CD4-positive, alpha-beta T cell (primary cell): ENCODE measurements at regions of chr3 and their contacts with region 1.

Region 1: DNA sequence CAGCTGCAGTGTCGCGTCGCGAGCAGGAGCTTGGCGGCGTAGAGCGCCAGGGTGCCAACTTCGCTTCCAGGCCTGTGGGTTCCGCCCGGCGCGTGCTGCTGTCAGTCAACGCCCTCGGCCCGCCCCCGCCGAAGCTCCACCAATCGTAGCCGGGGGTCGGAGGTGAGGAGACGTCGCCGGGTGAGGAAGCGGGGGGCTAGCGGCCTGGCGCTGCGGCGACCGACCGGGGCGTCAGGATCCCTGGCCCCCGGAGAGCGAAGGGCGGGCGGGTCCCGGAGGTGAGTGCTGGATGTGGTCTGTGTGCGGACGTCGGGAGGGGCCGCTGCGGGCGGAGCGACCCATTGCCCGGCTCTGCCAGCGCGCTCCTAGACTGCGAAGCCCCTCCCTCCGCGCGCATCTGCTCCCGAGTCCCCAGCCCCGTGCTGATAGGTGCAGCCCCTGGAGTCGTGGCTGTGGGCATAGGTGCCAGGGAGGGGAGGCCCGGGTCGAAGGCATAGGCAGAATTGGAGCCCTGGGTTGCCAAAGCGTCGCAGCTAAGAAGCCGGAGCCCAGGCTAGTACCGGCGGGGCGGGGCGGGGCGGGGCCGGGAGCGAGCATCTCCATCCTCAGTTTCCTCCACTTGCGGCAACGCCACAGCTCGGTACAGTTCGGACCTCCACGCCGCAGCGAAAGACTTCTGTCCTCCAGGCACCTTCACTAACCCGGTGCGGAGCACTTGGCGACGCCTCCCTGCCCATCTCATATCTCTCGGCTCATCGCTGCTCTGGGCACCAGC is at the start of gene NXPE3:
- DNase-seq: peak; percentile 88 to 96 (median 93)
- ATAC-seq: peak; percentile 91
- H3K4me3 ChIP-seq: peak within 1 kb of the TSS; percentile 89
- H3K4me3 Mint-ChIP-seq: peak within 1 kb of the TSS; percentile 98
- H3K27ac ChIP-seq: peak within 1 kb of the TSS; percentile 87 to 89
- H3K27ac Mint-ChIP-seq: peak within 1 kb of the TSS; percentile 100
- H3K4me1 ChIP-seq: peaks cover 26% of the 10 kb centered on the region
- H3K4me1 Mint-ChIP-seq: peaks cover 62% of the 10 kb centered on the region
- H3K27me3 ChIP-seq: no peaks in the 10 kb centered on the region
- H3K27me3 Mint-ChIP-seq: no peaks in the 10 kb centered on the region
- CTCF ChIP-seq: no peak
- total RNA-seq, gene NXPE3: 37.4 to 37.5 TPM

Region 2: GRCh38 chr3:100708967-100709841 is 1070.0 kb before region 1 on chr3 and contains the start of gene TFG:
- CTCF ChIA-PET with region 1: no interaction called
- POLR2A ChIA-PET with region 1: no interaction called
- intact Hi-C with region 1: loop called in 1 of 2 experiments (anchors 5 kb)
- DNase-seq: peak; percentile 94 to 100 (median 96)
- ATAC-seq: peak; percentile 91
- H3K4me3 ChIP-seq: peak within 1 kb of the TSS; percentile 73
- H3K4me3 Mint-ChIP-seq: peak within 1 kb of the TSS; percentile 97
- H3K27ac ChIP-seq: peak within 1 kb of the TSS; percentile 77 to 94
- H3K27ac Mint-ChIP-seq: peak within 1 kb of the TSS; percentile 97
- H3K4me1 ChIP-seq: peaks cover 24% of the 10 kb centered on the region
- H3K4me1 Mint-ChIP-seq: peaks cover 49% of the 10 kb centered on the region
- H3K27me3 ChIP-seq: no peaks in the 10 kb centered on the region
- H3K27me3 Mint-ChIP-seq: peaks cover 16% of the 10 kb centered on the region
- CTCF ChIP-seq: no peak
- total RNA-seq, gene TFG: 56.5 to 58.8 TPM

Region 3: GRCh38 chr3:101453961-101454360 is 325.3 kb before region 1 on chr3:
- CTCF ChIA-PET with region 1: no interaction called
- POLR2A ChIA-PET with region 1: no interaction called
- intact Hi-C with region 1: no loop called
- DNase-seq: no peak
- ATAC-seq: no peak
- H3K4me3 ChIP-seq: no peak overlapping the region
- H3K4me3 Mint-ChIP-seq: no peak overlapping the region
- H3K27ac ChIP-seq: no peak overlapping the region
- H3K27ac Mint-ChIP-seq: peak overlapping the region; percentile 16
- H3K4me1 ChIP-seq: no peaks in the 10 kb centered on the region
- H3K4me1 Mint-ChIP-seq: peaks cover 42% of the 10 kb centered on the region
- H3K27me3 ChIP-seq: no peaks in the 10 kb centered on the region
- H3K27me3 Mint-ChIP-seq: no peaks in the 10 kb centered on the region
- CTCF ChIP-seq: no peak

Region 4: DNA sequence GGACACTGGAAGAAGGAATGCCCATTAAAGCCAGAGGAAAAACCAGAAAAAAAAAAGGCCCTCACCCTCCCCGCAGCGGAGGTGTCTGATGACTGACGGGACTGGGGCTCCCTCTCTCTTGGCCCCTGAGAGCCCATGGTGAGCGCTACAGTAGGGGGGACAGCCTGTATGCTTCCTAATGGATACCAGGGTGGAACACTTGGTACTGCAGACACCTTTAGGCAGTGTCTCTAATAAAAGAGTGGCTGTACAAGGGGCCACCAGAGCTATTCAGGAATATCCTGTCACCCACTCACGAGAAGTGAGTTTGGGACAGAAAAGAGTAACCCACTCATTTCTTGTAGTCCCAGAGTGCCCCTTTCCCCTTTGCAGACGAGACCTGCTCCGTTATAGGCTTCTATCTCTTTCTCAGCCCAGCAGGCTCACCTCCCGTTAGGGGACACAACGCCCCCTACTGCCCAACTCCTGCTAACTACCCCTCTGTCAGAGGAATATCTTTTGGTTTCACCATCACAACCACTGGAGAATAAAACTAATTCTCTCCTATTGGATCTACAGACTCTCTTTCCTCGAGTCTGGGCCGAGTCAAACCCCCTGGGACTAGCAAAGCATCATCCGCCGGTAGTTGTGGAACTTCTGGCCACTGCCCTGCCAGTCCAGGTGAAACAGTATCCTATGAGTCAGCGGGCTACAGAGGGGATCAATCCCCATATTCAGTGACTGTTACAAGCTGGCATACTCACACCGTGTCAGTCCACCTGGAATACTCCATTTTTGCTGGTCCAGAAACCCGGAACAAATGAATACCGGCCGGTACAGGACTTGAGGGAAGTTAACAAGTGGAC is 143.1 kb before region 1 on chr3:
- CTCF ChIA-PET with region 1: no interaction called
- POLR2A ChIA-PET with region 1: no interaction called
- intact Hi-C with region 1: no loop called
- DNase-seq: peak; percentile 58 to 75 (median 66)
- ATAC-seq: peak; percentile 94
- H3K4me3 ChIP-seq: no peak overlapping the region
- H3K4me3 Mint-ChIP-seq: no peak overlapping the region
- H3K27ac ChIP-seq: no peak overlapping the region
- H3K27ac Mint-ChIP-seq: no peak overlapping the region
- H3K4me1 ChIP-seq: peaks cover 6% of the 10 kb centered on the region
- H3K4me1 Mint-ChIP-seq: peaks cover 6% of the 10 kb centered on the region
- H3K27me3 ChIP-seq: no peaks in the 10 kb centered on the region
- H3K27me3 Mint-ChIP-seq: no peaks in the 10 kb centered on the region
- CTCF ChIP-seq: peak; percentile 61

Region 5: DNA sequence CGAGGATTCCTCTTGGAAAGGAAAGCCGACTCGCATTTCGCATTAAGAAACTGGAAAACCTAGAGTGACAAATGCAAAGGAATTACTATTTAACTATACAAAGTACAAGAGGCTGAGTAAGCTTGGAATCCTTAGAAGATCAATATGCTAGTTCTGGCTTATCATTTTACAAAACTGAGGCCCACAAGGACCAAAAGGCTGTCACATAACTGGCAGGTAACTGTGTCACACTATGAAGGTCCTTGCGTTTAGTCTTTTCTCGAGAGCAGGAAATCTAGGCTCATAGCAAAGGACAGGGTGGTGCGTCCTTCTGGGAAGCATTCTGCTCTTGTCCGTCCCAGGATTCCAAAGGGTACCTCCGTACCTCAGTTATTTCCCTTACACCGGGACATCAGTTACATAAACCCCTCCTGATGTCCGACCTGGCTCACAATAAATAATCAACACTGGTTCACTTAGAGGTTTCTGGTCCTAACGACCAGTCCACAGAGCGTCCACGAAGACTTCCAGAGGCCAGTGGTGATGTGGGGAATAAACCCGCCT is 93.3 kb before region 1 on chr3:
- CTCF ChIA-PET with region 1: no interaction called
- POLR2A ChIA-PET with region 1: interaction called, 17 read pairs
- intact Hi-C with region 1: no loop called
- DNase-seq: peak in 4 of 14 experiments; percentile 7 to 40 (median 26)
- ATAC-seq: peak; percentile 5
- H3K4me3 ChIP-seq: peak overlapping the region; percentile 91
- H3K4me3 Mint-ChIP-seq: peak overlapping the region; percentile 99
- H3K27ac ChIP-seq: peak overlapping the region; percentile 87 to 94
- H3K27ac Mint-ChIP-seq: peak overlapping the region; percentile 99
- H3K4me1 ChIP-seq: peaks cover 30% of the 10 kb centered on the region
- H3K4me1 Mint-ChIP-seq: peaks cover 49% of the 10 kb centered on the region
- H3K27me3 ChIP-seq: no peaks in the 10 kb centered on the region
- H3K27me3 Mint-ChIP-seq: no peaks in the 10 kb centered on the region
- CTCF ChIP-seq: no peak

Region 6: GRCh38 chr3:101735833-101736232 is 43.4 kb before region 1 on chr3:
- CTCF ChIA-PET with region 1: no interaction called
- POLR2A ChIA-PET with region 1: no interaction called
- intact Hi-C with region 1: loop called (anchors 1 to 2 kb)
- DNase-seq: no peak
- ATAC-seq: no peak
- H3K4me3 ChIP-seq: no peak overlapping the region
- H3K4me3 Mint-ChIP-seq: no peak overlapping the region
- H3K27ac ChIP-seq: no peak overlapping the region
- H3K27ac Mint-ChIP-seq: no peak overlapping the region
- H3K4me1 ChIP-seq: no peaks in the 10 kb centered on the region
- H3K4me1 Mint-ChIP-seq: no peaks in the 10 kb centered on the region
- H3K27me3 ChIP-seq: no peaks in the 10 kb centered on the region
- H3K27me3 Mint-ChIP-seq: no peaks in the 10 kb centered on the region
- CTCF ChIP-seq: no peak

Region 7: DNA sequence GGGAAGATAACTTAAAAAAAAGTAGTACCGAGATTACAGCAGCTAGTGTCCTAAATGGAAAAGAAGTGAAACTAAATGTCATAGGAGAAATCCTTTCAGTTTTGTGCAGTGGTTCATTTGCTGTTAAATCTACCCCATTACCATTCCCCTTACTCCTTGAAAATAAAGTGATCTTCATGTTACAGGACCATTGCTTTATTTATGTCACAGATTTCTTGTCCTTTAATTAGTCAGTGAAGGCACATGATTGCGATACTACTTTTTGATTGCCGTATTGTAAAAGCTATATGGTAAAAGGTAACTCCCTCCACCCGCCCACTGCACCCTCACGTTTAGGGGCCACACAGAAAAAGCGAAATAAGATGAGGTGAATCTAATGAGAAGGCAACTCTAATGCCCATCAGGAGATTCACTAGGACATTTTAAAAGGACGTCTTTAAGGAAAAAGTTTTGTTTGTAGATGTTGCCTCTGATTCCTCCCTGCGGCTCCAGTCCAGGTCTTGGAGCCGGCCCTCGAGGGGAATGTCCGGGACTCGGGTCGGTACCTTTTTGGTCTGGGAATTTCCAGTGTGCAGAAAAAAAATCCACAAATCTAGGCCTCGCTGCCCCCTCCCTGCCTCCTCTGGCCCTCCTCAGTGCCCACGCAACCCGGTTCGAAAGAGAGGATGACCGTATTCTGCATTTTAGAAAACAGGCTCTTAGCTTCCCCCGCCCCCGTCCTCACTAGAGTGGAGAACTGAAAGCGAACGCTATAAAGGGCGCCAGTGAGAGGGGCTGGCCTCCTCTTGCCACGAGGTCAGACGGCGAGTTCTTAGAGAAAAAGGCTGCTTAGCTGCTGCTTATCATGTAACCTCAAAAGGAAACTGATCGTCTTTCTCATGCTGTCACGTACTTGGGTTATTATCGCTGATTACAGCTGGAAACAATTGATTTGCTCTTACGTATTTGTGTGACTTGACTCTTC is 48.3 kb after region 1 on chr3:
- CTCF ChIA-PET with region 1: no interaction called
- POLR2A ChIA-PET with region 1: interaction called, 15 read pairs
- intact Hi-C with region 1: no loop called
- DNase-seq: peak; percentile 55 to 93 (median 66)
- ATAC-seq: peak; percentile 79
- H3K4me3 ChIP-seq: peak overlapping the region; percentile 70
- H3K4me3 Mint-ChIP-seq: peak overlapping the region; percentile 98
- H3K27ac ChIP-seq: peak overlapping the region; percentile 90 to 93
- H3K27ac Mint-ChIP-seq: peak overlapping the region; percentile 99
- H3K4me1 ChIP-seq: peaks cover 31% of the 10 kb centered on the region
- H3K4me1 Mint-ChIP-seq: peaks cover 66% of the 10 kb centered on the region
- H3K27me3 ChIP-seq: no peaks in the 10 kb centered on the region
- H3K27me3 Mint-ChIP-seq: no peaks in the 10 kb centered on the region
- CTCF ChIP-seq: no peak

Region 8: DNA sequence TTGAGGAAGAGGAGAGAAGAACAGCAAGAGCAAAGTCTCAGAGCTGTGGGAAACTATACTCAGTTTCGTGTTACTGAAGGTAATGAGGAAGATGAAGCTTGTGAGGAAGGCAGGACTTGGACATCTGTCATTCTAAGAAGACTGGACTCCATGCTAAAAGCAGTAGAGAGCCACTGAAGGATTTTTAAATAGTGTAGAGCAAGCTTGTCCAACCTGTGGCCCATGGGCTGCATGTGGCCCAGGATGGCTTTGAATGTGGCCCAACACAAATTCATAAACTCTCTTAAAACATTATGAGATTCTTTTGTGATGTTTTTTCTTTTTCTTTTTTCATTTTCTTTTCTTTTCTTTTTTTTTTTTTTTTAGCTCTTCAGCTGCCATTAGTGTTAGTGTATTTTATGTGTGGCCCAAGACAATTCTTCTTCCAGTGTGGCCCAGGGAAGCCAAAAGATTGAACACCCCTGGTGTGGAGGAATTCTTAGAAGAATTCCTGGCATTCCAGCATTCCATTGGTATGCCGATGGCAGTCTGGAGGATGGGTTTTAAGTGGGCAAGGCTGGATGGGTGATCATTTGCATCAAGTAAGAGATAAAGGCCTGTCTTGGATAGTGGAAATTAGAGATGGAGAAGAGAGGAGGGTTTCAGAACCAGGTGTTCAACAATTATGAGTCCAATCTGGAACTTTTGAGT is 63.2 kb after region 1 on chr3:
- CTCF ChIA-PET with region 1: no interaction called
- POLR2A ChIA-PET with region 1: no interaction called
- intact Hi-C with region 1: no loop called
- DNase-seq: no peak
- ATAC-seq: no peak
- H3K4me3 ChIP-seq: no peak overlapping the region
- H3K4me3 Mint-ChIP-seq: no peak overlapping the region
- H3K27ac ChIP-seq: no peak overlapping the region
- H3K27ac Mint-ChIP-seq: no peak overlapping the region
- H3K4me1 ChIP-seq: no peaks in the 10 kb centered on the region
- H3K4me1 Mint-ChIP-seq: no peaks in the 10 kb centered on the region
- H3K27me3 ChIP-seq: no peaks in the 10 kb centered on the region
- H3K27me3 Mint-ChIP-seq: no peaks in the 10 kb centered on the region
- CTCF ChIP-seq: no peak

Region 9: DNA sequence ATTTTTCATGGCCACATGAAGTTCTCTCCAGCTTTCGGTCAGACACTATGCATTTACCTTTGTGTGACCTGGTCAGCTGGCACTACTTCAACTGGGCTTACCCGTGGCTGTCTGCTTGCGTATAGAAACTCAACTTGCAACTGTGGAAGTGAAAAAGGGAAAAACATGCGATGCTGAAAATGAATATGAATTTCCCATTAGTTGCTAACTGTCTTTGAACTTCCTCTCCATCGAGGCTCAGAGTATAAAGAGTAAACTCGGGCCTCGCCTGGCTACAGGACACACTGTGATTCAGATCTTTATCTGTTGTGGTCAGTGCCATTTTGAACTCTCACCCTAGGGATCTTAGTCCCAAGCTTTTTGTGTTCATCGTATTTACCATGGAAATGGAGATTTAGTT is 96.9 kb after region 1 on chr3:
- CTCF ChIA-PET with region 1: no interaction called
- POLR2A ChIA-PET with region 1: no interaction called
- intact Hi-C with region 1: no loop called
- DNase-seq: peak in 2 of 14 experiments; percentile 51 to 52
- ATAC-seq: no peak
- H3K4me3 ChIP-seq: no peak overlapping the region
- H3K4me3 Mint-ChIP-seq: no peak overlapping the region
- H3K27ac ChIP-seq: no peak overlapping the region
- H3K27ac Mint-ChIP-seq: no peak overlapping the region
- H3K4me1 ChIP-seq: no peaks in the 10 kb centered on the region
- H3K4me1 Mint-ChIP-seq: no peaks in the 10 kb centered on the region
- H3K27me3 ChIP-seq: no peaks in the 10 kb centered on the region
- H3K27me3 Mint-ChIP-seq: no peaks in the 10 kb centered on the region
- CTCF ChIP-seq: no peak